ENCODE measurements at regions of chr10 and their contacts with region 1.

Region 1: GRCh38 chr10:101649525-101650085 is 45.4 kb downstream of the FBXW4 start:
- DNase-seq: no peak
- ATAC-seq: peak in 1 of 8 donors; percentile 39
- H3K4me3 ChIP-seq: no peak overlapping the region
- H3K27ac ChIP-seq: no peak overlapping the region
- H3K4me1 ChIP-seq: peaks cover 0 to 20% (median 8%) of the 10 kb centered on the region in 9 donors
- H3K27me3 ChIP-seq: no peaks in the 10 kb centered on the region
- CTCF ChIP-seq: no peak

Region 2: GRCh38 chr10:101660256-101660655 is 10.7 kb after region 1 on chr10:
- intact Hi-C with region 1: loop called in 1 of 10 experiments (anchors 1 kb)
- DNase-seq: no peak
- ATAC-seq: no peak
- H3K4me3 ChIP-seq: no peak overlapping the region
- H3K27ac ChIP-seq: no peak overlapping the region
- H3K4me1 ChIP-seq: peaks cover 0 to 14% (median 0%) of the 10 kb centered on the region in 9 donors
- H3K27me3 ChIP-seq: no peaks in the 10 kb centered on the region
- CTCF ChIP-seq: no peak

Measured in heart right ventricle (tissue), 16 donors.